GM10248 (cell line): ENCODE measurements at regions of chr5 and their contacts with region 1.

Region 1: DNA sequence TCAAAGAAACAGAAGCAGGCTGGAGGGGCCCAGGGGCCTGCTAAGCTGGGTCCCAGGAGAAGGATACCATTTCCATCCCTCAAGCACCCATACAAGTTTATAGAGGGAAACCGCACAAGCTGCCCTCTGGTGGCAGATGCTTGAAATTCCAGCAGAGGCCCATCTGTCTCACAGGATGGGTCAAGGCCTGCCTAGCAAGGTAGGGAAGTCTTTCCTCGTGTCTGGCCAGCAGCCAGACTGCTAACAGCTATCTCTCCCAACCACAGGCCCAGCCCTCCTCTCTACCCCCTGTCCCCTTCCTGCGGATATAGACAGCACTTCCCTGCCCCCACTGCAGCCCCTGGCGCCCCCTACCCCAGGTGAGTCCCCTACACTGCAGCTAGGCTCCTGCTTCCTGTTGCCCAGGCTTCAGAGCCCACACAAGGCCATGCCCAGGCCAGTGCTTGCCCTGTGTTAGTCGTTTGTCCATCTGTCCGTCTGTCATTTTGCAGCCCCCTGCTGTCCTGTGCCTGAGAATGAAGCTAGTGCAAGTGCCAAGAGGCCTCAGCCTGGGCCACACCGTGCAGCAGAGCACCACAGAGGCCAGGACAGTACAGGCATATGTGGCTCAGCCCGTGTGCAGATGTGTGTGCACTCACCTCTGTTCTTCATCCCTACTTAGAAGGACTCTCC is 26.2 kb downstream of the TCF7 start:
- DNase-seq: peak; percentile 74
- CTCF ChIP-seq: peak; percentile 80

Region 2: DNA sequence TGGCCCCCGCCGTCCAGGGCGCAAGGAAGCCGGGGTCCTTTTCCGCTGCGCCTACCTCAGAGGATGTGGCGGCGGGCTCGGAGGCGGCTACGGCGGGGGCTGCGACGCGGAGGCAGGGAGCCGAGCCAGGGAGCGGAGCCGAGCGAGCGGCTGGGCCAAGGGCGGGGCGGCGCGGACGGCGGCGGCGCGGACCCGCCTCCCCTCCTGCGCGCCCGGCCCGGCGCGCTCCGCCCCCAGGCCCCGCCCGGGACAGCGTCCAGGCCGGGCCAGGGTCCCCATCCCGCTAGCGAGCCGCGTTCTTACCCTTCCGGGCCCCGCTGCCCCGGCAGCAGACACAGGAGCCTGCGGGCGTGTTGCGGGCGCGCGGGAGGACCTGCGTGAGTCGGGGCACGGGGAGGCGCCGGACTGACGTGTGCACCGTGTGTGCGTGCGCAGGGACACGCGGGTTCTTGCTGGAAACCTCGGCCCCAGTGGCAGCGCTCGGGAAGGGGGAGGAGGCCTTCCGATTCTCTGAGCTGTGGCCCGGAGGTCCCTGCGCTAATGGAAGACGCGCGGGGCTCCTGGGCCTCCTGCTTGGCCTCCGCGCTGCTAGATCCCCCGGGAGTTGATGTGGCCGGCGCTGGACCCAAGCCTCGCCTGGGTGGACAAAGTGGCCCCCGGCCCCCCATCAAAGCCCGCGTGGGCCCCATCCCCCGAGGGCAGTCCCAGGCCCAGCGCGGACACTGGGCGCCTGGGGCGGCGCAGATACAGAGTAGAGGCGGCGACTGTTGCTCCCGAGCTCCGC is 135.9 kb before region 1 on chr5 and contains the start of gene VDAC1:
- CTCF ChIA-PET with region 1: interaction called, 13 read pairs
- POLR2A ChIA-PET with region 1: no interaction called
- DNase-seq: peak; percentile 96
- CTCF ChIP-seq: no peak

Region 3: GRCh38 chr5:134070725-134071613 is 69.7 kb before region 1 on chr5:
- CTCF ChIA-PET with region 1: interaction called, 22 read pairs
- POLR2A ChIA-PET with region 1: no interaction called
- DNase-seq: peak; percentile 67
- CTCF ChIP-seq: peak; percentile 3

Region 4: DNA sequence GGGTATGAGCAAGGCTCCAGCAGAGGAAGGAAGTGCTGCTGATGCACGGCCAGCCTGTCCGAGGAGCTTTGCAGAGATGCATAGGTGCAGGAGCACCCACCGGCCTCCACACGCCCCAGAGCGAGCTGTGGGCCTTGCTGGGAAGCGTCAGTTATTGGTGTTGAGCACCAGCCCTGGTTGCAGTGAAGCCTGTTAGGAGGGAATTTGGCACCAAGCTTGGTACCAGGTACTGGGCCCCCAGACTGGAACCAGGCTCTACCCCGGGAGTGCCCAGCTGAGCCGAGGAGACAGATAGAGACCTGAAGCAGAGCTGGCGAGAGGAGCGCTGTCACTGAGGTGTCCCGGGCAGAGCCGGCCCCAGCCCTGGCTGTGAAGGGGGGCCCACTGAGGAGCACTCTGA is 20.9 kb before region 1 on chr5:
- CTCF ChIA-PET with region 1: no interaction called
- POLR2A ChIA-PET with region 1: no interaction called
- DNase-seq: no peak
- CTCF ChIP-seq: no peak

Region 5: GRCh38 chr5:134153657-134154056 is 13.0 kb after region 1 on chr5:
- CTCF ChIA-PET with region 1: interaction called, 63 read pairs
- POLR2A ChIA-PET with region 1: no interaction called
- DNase-seq: no peak
- CTCF ChIP-seq: no peak

Region 6: GRCh38 chr5:134161513-134162395 is 21.1 kb after region 1 on chr5:
- CTCF ChIA-PET with region 1: interaction called, 16 read pairs
- POLR2A ChIA-PET with region 1: no interaction called
- DNase-seq: no peak
- CTCF ChIP-seq: no peak

Region 7: GRCh38 chr5:134328619-134329018 is 188.0 kb after region 1 on chr5:
- CTCF ChIA-PET with region 1: no interaction called
- POLR2A ChIA-PET with region 1: no interaction called
- DNase-seq: no peak
- CTCF ChIP-seq: no peak